ENCODE measurements at regions of chr9 and their contacts with region 1.

Region 1: GRCh38 chr9:100884518-100884917 is 144.0 kb upstream of the PLPPR1 start:
- DNase-seq: no peak
- ATAC-seq: no peak
- H3K4me3 ChIP-seq: no peak overlapping the region
- H3K27ac ChIP-seq: no peak overlapping the region
- H3K4me1 ChIP-seq: no peaks in the 10 kb centered on the region
- H3K27me3 ChIP-seq: peaks cover 18% of the 10 kb centered on the region
- CTCF ChIP-seq: no peak
- POLR2A ChIP-seq: no peak
- RAD21 ChIP-seq: no peak

Region 2: DNA sequence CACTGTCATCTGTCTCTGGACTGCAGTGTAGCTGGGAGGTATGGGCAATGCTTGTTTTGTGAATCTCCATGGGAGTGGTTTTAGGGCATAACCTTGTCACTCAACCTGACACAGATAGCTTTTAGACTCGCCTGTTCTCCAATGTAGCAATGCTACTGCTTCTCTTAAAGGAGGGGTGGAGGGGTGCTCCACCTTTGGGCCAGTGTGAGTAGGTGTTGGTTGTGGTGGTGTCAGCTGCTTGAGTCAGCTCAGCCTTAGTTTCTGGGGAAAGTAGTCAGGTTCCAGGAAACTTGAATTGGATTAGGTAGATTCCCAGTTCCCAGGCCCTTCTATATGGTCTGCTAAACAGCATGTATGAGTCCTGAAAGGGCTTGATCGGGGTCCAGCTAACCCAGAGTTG is 52.9 kb after region 1 on chr9:
- CTCF ChIA-PET with region 1: no interaction called
- POLR2A ChIA-PET with region 1: no interaction called
- RAD21 ChIA-PET with region 1: no interaction called
- intact Hi-C with region 1: loop called (anchors 10 kb)
- DNase-seq: no peak
- ATAC-seq: no peak
- H3K4me3 ChIP-seq: no peak overlapping the region
- H3K27ac ChIP-seq: no peak overlapping the region
- H3K4me1 ChIP-seq: no peaks in the 10 kb centered on the region
- H3K27me3 ChIP-seq: no peaks in the 10 kb centered on the region
- CTCF ChIP-seq: no peak
- POLR2A ChIP-seq: no peak
- RAD21 ChIP-seq: no peak

Measured in HCT116 (cell line).